Posterior cingulate gyrus (tissue), 11 donors: ENCODE measurements at regions of chr7 and their contacts with region 1.

Region 1: DNA sequence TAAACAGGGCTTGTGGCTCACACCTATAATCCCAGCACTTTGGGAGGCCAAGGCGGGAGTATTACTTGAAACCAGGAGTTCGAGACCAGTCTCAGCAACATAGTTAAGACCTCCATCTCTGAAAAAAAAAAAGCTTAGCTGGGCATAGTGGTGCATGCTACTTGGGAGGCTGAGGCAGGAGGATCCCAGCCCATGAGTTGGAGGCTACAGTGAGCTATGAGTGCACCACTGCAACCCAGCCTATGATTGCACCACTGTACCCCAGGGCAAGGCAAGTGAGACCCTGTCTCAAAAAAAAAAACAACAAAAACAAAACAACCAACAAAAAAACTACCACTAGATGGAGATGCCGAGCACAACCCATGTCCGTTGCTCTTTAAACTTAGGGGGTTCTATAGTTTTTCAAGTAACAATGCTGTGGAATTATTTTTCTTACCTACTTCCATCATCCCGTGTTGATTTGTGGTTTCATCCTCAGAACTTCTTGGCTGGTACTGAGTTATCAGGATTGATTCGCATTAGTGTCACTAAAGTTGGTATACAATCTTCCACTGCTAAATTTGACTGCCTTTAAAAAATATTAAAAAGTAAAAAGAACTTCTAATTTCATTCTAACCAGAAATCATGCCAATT is 12.2 kb upstream of the REPIN1 start:
- DNase-seq: peak in 1 of 10 donors; percentile 73

Region 2: GRCh38 chr7:150388709-150389531 is 32.5 kb after region 1 on chr7:
- intact Hi-C with region 1: loop called (anchors 2 kb)
- DNase-seq: peak; percentile 64 to 97 (median 78)

Region 3: DNA sequence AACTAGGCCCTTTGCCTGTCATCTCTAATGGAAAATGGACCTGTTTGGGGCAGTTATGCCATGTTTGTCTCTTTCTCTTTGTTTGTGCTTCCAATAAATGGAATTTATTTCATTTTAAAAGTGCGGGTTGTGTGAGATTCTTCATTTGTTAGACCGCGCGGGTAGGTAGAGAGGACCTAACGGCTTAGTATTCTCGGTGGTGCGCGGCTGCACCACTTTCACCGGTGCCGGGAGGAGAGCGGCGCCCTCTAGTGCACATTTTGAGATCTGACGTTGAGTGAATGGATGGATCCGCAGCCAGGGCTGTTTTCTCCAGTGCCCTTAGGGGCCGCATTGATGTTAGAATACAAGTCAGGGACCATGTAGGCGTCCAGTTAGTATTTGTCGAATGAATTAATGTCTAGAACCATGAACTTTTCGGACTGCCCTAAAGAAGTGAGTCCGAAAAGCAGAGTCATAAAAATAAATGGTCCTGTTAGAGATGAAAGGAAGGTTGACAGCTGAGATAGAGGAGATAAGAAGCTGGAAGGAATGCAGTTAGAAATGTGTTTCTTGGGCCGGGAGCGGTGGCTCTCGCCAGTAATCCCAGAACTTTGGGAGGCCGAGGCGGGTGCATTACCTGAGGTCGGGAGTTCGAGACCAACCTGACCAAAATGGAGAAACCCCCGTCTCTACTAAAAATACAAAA is 64.8 kb after region 1 on chr7:
- intact Hi-C with region 1: loop called (anchors 5 kb)
- DNase-seq: peak in 9 of 10 donors; percentile 55 to 95 (median 82)